ENCODE measurements at regions of chr16 and their contacts with region 1.

Region 1: GRCh38 chr16:74477226-74477625 is 55.9 kb upstream of the CLEC18B start:
- DNase-seq: no peak
- H3K4me3 ChIP-seq: no peak overlapping the region
- H3K27ac ChIP-seq: no peak overlapping the region
- H3K4me1 ChIP-seq: peaks cover 2% of the 10 kb centered on the region
- H3K27me3 ChIP-seq: no peaks in the 10 kb centered on the region
- CTCF ChIP-seq: no peak
- EP300 ChIP-seq: no peak
- POLR2A ChIP-seq: no peak

Region 2: DNA sequence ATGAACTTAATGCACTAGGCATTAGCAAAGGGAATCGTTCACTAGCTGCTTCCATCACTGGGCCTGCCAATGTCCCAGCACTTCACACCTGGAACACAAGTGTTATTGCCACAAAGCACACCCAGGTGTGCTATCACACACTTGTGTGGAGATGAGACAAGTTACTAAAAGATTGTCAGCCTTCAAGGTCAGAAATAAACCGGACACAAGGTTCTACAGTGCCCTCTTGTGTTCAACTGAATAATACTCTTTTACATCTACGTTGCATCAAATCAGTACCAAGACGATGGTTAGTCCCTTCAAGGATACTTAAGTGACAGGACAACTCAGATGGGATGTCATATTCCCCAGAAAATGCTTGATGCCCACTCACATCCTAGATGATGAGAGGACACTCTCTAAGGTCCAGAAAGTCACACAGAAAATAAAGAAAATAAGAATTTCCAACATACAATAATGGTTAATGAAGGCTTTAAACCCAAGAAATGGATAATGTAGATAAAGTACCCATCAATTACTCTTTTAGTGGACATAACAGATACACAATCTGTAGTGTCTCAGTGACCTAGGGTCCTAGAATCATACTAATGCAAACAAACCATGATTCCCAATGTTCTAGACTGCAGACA is 146.1 kb after region 1 on chr16:
- intact Hi-C with region 1: loop called in 1 of 4 experiments (anchors 10 kb)
- DNase-seq: no peak
- H3K4me3 ChIP-seq: no peak overlapping the region
- H3K27ac ChIP-seq: no peak overlapping the region
- H3K4me1 ChIP-seq: peaks cover 7% of the 10 kb centered on the region
- H3K27me3 ChIP-seq: no peaks in the 10 kb centered on the region
- CTCF ChIP-seq: peak in 2 of 3 donors; percentile 21 to 33
- EP300 ChIP-seq: no peak
- POLR2A ChIP-seq: no peak

Measured in ovary (tissue), 10 donors.